ENCODE measurements at regions of chr7 and their contacts with region 1.

Region 1: GRCh38 chr7:106736508-106737201 is 75.7 kb upstream of the CCDC71L start:
- DNase-seq: peak in 1 of 2 experiments; percentile 29
- H3K4me3 ChIP-seq: no peak overlapping the region
- H3K4me1 ChIP-seq: no peaks in the 10 kb centered on the region
- H3K27me3 ChIP-seq: no peaks in the 10 kb centered on the region

Region 2: GRCh38 chr7:106176414-106177299 is 560.0 kb before region 1 on chr7:
- in situ Hi-C with region 1: loop called (anchors 25 kb)
- DNase-seq: peak; percentile 71 to 87
- H3K4me3 ChIP-seq: no peak overlapping the region
- H3K4me1 ChIP-seq: no peaks in the 10 kb centered on the region
- H3K27me3 ChIP-seq: peaks cover 6% of the 10 kb centered on the region

Measured in HAP-1 (cell line).